ENCODE measurements at regions of chr19 and their contacts with region 1.

Region 1: GRCh38 chr19:33080761-33081681 is at the start of gene GPATCH1:
- DNase-seq: peak; percentile 87 to 90
- H3K4me3 ChIP-seq: peak within 1 kb of the TSS; percentile 89 to 94
- H3K27ac ChIP-seq: peak within 1 kb of the TSS; percentile 40 to 80
- H3K4me1 ChIP-seq: no peaks in the 10 kb centered on the region
- H3K27me3 ChIP-seq: no peaks in the 10 kb centered on the region
- CTCF ChIP-seq: peak in 2 of 4 experiments; percentile 31 to 42
- POLR2A ChIP-seq: peak; percentile 37 to 43
- total RNA-seq, gene GPATCH1: under 0.01 to 13.1 (median 7.4) TPM

Region 2: GRCh38 chr19:32971715-32972540 is 109.1 kb before region 1 on chr19 and contains the starts of genes CEP89 and FAAP24:
- intact Hi-C with region 1: loop called (anchors 10 kb)
- DNase-seq: peak; percentile 98 to 99
- H3K4me3 ChIP-seq: peak within 1 kb of the TSS; percentile 58 to 87
- H3K27ac ChIP-seq: peak within 1 kb of the TSS; percentile 69 to 81
- H3K4me1 ChIP-seq: peaks cover 5 to 8% of the 10 kb centered on the region in 2 donors
- H3K27me3 ChIP-seq: no peaks in the 10 kb centered on the region
- CTCF ChIP-seq: peak in 1 of 4 experiments; percentile 25
- POLR2A ChIP-seq: peak in 1 of 2 donors; percentile 22
- total RNA-seq, gene CEP89: 5.1 to 29.2 (median 10.6) TPM
- total RNA-seq, gene FAAP24: 2.0 to 3.8 TPM in 2 of 4 donors, not detected in the others

Measured in uterus (tissue), 4 donors.